ENCODE measurements at regions of chr10 and their contacts with region 1.

Region 1: GRCh38 chr10:103486336-103487160 is 7.0 kb upstream of the NEURL1 start:
- DNase-seq: no peak
- ATAC-seq: no peak
- H3K4me3 Mint-ChIP-seq: no peak overlapping the region
- H3K27ac Mint-ChIP-seq: no peak overlapping the region
- H3K4me1 Mint-ChIP-seq: no peaks in the 10 kb centered on the region
- H3K27me3 Mint-ChIP-seq: peaks cover 4% of the 10 kb centered on the region
- CTCF ChIP-seq: no peak

Region 2: DNA sequence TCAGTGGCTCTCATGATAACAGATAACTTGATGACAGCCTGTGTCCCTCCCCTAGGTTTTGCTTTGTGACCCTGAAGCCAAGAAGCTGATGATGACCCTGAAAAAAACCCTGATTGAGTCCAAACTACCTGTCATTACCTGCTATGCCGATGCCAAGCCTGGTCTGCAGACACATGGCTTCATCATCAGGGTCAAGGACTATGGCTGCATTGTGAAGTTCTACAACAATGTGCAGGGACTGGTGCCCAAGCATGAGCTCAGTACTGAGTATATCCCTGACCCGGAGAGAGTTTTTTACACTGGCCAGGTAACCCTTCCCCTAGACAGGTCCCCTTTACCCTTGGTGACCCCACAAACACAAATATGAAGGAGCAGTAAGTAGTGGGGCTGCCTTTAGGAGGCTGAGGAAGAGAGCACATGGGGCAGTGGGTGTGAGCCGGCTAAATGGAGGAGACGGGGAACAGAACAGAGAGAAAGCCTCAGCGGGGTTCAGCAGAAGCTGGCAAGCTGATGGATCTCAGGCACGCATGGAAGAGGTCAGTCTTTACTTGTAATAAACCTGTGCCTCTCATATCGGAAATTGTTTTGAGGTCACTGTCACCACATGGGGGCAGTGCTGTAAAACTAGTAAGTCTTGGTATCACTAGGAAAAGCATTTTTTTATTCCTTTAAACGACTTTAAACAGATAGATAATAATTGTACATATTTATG is 70.0 kb before region 1 on chr10:
- CTCF ChIA-PET with region 1: interaction called, 15 read pairs
- POLR2A ChIA-PET with region 1: no interaction called
- DNase-seq: peak; percentile 41
- ATAC-seq: peak; percentile 53
- H3K4me3 Mint-ChIP-seq: no peak overlapping the region
- H3K27ac Mint-ChIP-seq: no peak overlapping the region
- H3K4me1 Mint-ChIP-seq: no peaks in the 10 kb centered on the region
- H3K27me3 Mint-ChIP-seq: no peaks in the 10 kb centered on the region
- CTCF ChIP-seq: no peak

Region 3: GRCh38 chr10:103451831-103452505 is 34.6 kb before region 1 on chr10 and contains the start of gene CALHM2:
- CTCF ChIA-PET with region 1: interaction called, 29 read pairs
- POLR2A ChIA-PET with region 1: no interaction called
- DNase-seq: peak; percentile 60
- ATAC-seq: peak; percentile 71
- H3K4me3 Mint-ChIP-seq: peak within 1 kb of the TSS; percentile 68
- H3K27ac Mint-ChIP-seq: no peak within 1 kb of the TSS
- H3K4me1 Mint-ChIP-seq: peaks cover 7% of the 10 kb centered on the region; the same call in 1 of the 2 replicates
- H3K27me3 Mint-ChIP-seq: no peaks in the 10 kb centered on the region
- CTCF ChIP-seq: no peak
- total RNA-seq, gene CALHM2: 1.8 to 2.4 TPM (median 1.9 TPM) in 3 replicates

Region 4: GRCh38 chr10:103470761-103471653 is 15.5 kb before region 1 on chr10:
- CTCF ChIA-PET with region 1: interaction called, 29 read pairs
- POLR2A ChIA-PET with region 1: interaction called, 3 read pairs
- DNase-seq: no peak
- ATAC-seq: peak; percentile 58
- H3K4me3 Mint-ChIP-seq: no peak overlapping the region
- H3K27ac Mint-ChIP-seq: no peak overlapping the region
- H3K4me1 Mint-ChIP-seq: peaks cover 11% of the 10 kb centered on the region
- H3K27me3 Mint-ChIP-seq: no peaks in the 10 kb centered on the region; the same call in 1 of the 2 replicates
- CTCF ChIP-seq: no peak

Region 5: GRCh38 chr10:103504181-103504783 is 17.7 kb after region 1 on chr10:
- CTCF ChIA-PET with region 1: interaction called, 18 read pairs
- POLR2A ChIA-PET with region 1: no interaction called
- DNase-seq: no peak
- ATAC-seq: no peak
- H3K4me3 Mint-ChIP-seq: no peak overlapping the region
- H3K27ac Mint-ChIP-seq: no peak overlapping the region
- H3K4me1 Mint-ChIP-seq: peaks cover 10% of the 10 kb centered on the region; the same call in 1 of the 2 replicates
- H3K27me3 Mint-ChIP-seq: peaks cover 6% of the 10 kb centered on the region; the same call in 1 of the 2 replicates
- CTCF ChIP-seq: no peak

Region 6: GRCh38 chr10:103517234-103518085 is 30.9 kb after region 1 on chr10:
- CTCF ChIA-PET with region 1: no interaction called
- POLR2A ChIA-PET with region 1: no interaction called
- DNase-seq: no peak
- ATAC-seq: no peak
- H3K4me3 Mint-ChIP-seq: no peak overlapping the region
- H3K27ac Mint-ChIP-seq: no peak overlapping the region
- H3K4me1 Mint-ChIP-seq: peaks cover 25% of the 10 kb centered on the region
- H3K27me3 Mint-ChIP-seq: no peaks in the 10 kb centered on the region
- CTCF ChIP-seq: no peak

Region 7: DNA sequence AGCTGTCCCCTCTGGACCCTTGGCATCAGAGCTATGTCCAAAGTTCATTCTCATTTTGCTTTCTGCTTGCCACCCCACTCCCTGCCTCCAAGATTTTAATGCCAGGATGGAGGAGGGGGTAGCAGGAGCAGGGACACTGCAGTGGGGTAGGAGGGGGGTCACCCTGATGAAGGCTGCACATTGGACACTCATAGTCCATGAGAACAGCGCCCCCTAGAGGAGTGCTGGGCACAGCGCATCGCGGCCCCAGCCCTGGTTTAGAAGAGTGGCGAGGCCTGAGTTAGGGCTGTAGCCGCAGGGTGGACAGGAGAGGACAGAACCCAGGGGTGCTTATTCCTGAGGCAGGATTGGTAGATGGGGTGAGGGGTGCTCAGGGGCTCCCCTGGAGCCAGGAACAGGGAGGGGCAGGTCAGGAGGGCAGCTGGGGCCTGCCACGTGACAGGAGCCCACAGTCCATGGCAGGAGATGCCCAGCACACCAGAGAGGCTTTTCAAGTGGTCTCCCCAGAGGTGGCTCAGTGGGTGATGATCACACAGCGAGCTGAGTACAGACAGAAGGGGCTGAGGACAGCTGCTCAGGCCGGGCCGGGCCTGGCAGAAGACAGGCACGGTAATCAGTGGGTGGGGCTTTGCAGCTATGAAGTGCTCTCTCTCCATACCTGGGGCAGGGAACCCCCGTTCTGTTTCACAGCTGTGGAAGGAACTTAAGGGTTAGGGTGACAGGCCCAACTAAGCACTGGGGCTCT is 78.4 kb after region 1 on chr10:
- CTCF ChIA-PET with region 1: interaction called, 12 read pairs
- POLR2A ChIA-PET with region 1: no interaction called
- DNase-seq: peak; percentile 87
- ATAC-seq: peak; percentile 93
- H3K4me3 Mint-ChIP-seq: no peak overlapping the region
- H3K27ac Mint-ChIP-seq: no peak overlapping the region
- H3K4me1 Mint-ChIP-seq: no peaks in the 10 kb centered on the region
- H3K27me3 Mint-ChIP-seq: no peaks in the 10 kb centered on the region; the same call in 1 of the 2 replicates
- CTCF ChIP-seq: peak; percentile 99

Region 8: DNA sequence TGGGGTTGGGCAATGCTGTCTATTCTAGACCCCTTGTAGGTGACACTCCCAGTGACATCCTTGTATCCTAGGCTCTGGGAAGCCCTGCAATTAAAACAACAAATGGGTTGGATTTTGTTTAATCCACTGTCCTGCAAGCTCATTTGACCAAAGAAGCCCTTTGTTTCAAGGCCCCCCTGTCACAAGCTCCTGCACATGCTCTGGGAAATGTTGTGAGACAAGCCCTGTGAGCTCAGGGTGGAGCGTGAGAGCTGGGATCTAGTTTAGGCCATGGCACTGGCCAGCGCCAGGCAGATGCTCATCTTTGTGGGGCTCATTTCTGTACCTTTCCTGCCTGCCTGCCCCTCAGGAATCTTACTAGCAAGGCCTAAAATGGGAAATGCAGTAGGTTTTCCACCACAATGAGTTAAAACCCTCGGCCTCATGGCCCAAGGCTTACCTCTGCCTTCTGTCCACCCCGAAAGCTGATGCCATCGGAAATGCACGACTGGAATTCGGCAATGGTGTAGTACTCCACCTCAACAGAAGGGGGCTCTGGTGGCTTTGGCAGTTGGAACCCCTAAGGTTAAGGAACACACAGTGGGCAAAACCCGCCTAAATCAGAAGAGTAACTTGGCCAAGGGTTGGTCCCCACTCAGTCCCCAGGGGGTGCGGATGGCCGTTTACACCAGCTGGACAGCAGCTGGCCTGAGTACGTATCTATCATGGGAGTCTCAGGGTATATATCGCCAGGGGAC is 119.0 kb after region 1 on chr10:
- CTCF ChIA-PET with region 1: no interaction called
- POLR2A ChIA-PET with region 1: no interaction called
- DNase-seq: peak; percentile 77
- ATAC-seq: peak; percentile 76
- H3K4me3 Mint-ChIP-seq: no peak overlapping the region
- H3K27ac Mint-ChIP-seq: no peak overlapping the region
- H3K4me1 Mint-ChIP-seq: no peaks in the 10 kb centered on the region
- H3K27me3 Mint-ChIP-seq: peaks cover 5% of the 10 kb centered on the region; the same call in 1 of the 2 replicates
- CTCF ChIP-seq: peak; percentile 75

Region 9: DNA sequence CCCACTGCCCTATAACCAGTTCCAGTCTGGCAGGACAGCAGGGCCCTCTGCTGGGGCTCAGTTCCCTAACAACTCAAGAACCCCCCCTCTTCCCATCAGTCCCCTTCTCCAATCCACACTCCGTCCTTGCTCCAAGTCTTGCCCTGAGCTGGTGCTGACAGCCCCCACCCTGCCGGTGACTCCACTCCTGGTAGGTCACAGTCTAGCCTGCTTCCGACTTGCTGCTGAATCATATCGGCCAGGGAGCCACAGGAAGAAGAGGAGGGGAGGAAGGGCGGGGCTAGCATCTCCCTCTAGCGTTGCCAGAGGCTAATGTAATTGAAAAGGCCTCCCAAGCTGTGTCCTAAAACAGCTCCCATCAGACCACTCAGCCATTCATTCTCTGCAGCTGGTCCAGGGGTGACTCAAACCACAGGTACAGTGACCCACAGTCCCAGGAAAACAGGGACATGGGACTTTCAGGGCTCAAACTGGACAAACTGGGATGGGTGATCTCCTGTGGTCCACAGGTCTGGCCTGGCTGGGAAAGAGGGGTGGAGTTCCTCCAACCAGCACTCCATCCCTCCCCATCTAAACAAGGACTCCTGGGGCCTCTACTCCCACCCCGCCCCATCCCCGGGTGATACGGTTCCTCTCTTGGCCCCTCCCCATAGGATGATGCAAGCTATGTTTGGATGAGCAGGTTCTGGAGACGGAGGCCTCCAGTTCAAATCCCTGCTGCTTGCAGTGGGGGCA is 210.0 kb after region 1 on chr10:
- CTCF ChIA-PET with region 1: no interaction called
- POLR2A ChIA-PET with region 1: no interaction called
- DNase-seq: peak; percentile 55
- ATAC-seq: peak; percentile 53
- H3K4me3 Mint-ChIP-seq: no peak overlapping the region
- H3K27ac Mint-ChIP-seq: no peak overlapping the region; the same call in 1 of the 2 replicates
- H3K4me1 Mint-ChIP-seq: peaks cover 28% of the 10 kb centered on the region
- H3K27me3 Mint-ChIP-seq: peaks cover 32% of the 10 kb centered on the region
- CTCF ChIP-seq: no peak

Region 10: GRCh38 chr10:103990121-103990520 is 503.6 kb after region 1 on chr10:
- CTCF ChIA-PET with region 1: no interaction called
- POLR2A ChIA-PET with region 1: no interaction called
- DNase-seq: no peak
- ATAC-seq: no peak
- H3K4me3 Mint-ChIP-seq: no peak overlapping the region
- H3K27ac Mint-ChIP-seq: no peak overlapping the region; the same call in 1 of the 2 replicates
- H3K4me1 Mint-ChIP-seq: no peaks in the 10 kb centered on the region
- H3K27me3 Mint-ChIP-seq: no peaks in the 10 kb centered on the region
- CTCF ChIP-seq: no peak

Measured in WTC11 (cell line).